Activated T-helper 1 cell treated with anti-CD3 and anti-CD28 coated beads, Interleukin-12 subunit alpha, Interleukin-12 subunit beta, Interleukin-2, Interleukin-4 antibody, amounts not matched to agents 30 ng/mL and 10 ng/mL and 1 ng/mL, durations not matched to agents 14 hours and 24 hours and 36 hours (primary cell): ENCODE measurements at regions of chr17 and their contacts with region 1.

Region 1: GRCh38 chr17:47895856-47896671 is at the start of gene SP2:
- DNase-seq: peak; percentile 100
- H3K4me3 Mint-ChIP-seq: peak within 1 kb of the TSS; percentile 98
- H3K27ac Mint-ChIP-seq: peak within 1 kb of the TSS; percentile 100
- H3K4me1 Mint-ChIP-seq: peaks cover 47% of the 10 kb centered on the region
- H3K27me3 Mint-ChIP-seq: peaks cover 3% of the 10 kb centered on the region
- total RNA-seq, gene SP2: 24.0 and 26.3 TPM in 2 replicates

Region 2: DNA sequence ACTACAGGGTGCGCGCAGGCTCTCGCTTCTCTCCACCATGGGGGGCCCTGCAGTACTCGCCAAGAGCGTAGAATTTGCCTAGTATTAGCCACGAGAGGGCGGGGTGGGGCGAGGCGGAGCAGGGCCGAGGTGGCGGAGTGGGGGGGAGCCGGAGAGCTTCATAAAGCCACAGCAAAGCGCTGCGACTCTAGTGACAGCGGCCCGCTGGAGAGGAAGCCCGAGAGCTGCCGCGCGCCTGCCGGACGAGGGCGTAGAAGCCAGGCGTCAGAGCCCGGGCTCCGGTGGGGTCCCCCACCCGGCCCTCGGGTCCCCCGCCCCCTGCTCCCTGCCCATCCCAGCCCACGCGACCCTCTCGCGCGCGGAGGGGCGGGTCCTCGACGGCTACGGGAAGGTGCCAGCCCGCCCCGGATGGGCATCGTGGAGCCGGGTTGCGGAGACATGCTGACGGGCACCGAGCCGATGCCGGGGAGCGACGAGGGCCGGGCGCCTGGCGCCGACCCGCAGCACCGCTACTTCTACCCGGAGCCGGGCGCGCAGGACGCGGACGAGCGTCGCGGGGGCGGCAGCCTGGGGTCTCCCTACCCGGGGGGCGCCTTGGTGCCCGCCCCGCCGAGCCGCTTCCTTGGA is 162.9 kb before region 1 on chr17 and contains the start of gene TBX21:
- intact Hi-C with region 1: loop called (anchors 2 kb)
- DNase-seq: peak; percentile 83
- H3K4me3 Mint-ChIP-seq: peak within 1 kb of the TSS; percentile 100
- H3K27ac Mint-ChIP-seq: peak within 1 kb of the TSS; percentile 96
- H3K4me1 Mint-ChIP-seq: peaks cover 84% of the 10 kb centered on the region
- H3K27me3 Mint-ChIP-seq: no peaks in the 10 kb centered on the region
- total RNA-seq, gene TBX21: 89.8 and 90.8 TPM in 2 replicates

Region 3: DNA sequence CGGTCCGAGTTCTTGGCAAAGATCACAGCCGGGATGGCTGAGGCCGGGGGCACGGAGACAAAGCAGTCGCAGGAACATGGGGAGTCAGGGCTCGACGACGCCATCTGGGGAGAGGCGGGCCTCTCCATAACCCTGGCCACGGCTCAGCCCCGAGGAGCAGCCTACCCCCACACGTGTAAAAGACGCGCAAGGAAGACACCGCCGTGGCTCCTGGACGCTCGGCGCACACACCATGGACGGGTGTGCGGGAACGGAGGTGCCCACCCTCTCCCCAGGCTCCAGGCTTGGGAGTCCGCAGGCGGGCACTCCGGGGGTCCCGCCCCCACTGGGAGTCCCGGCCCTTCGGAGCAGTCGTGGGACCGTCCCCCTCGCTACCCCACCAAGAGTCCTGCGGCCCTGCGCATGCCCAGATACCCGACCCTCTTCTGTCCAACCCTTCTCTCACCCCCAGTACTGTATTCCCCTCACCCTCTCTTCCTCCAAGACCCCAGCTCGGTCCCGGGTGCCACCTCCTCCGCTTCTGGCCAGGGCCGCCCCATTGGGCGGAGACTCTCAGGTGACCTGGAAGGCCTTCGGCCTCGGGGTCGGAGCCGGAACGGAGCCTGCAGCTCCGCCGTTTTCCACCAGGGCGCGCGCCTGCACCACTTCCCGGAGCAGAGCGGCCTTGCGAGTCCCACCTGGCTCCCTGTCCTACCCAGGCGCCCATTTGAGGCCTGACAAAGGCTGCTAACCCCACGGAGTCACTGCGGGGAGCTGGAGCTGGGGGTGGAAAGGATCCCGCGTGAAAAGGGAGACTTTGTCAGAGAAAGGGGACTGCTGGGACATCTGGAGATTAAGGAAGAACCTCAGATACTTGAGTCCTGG is 55.1 kb before region 1 on chr17 and contains the start of gene SCRN2:
- intact Hi-C with region 1: loop called (anchors 1 kb)
- DNase-seq: peak; percentile 86
- H3K4me3 Mint-ChIP-seq: peak within 1 kb of the TSS; percentile 96
- H3K27ac Mint-ChIP-seq: peak within 1 kb of the TSS; percentile 96
- H3K4me1 Mint-ChIP-seq: peaks cover 28% of the 10 kb centered on the region
- H3K27me3 Mint-ChIP-seq: peaks cover 16% of the 10 kb centered on the region
- total RNA-seq, gene SCRN2: 24.5 and 26.3 TPM in 2 replicates

Region 4: GRCh38 chr17:47970704-47971463 is 74.8 kb after region 1 on chr17 and contains the start of gene CDK5RAP3:
- intact Hi-C with region 1: loop called (anchors 1 kb)
- DNase-seq: peak; percentile 100
- H3K4me3 Mint-ChIP-seq: peak within 1 kb of the TSS; percentile 89
- H3K27ac Mint-ChIP-seq: peak within 1 kb of the TSS; percentile 93
- H3K4me1 Mint-ChIP-seq: peaks cover 31% of the 10 kb centered on the region
- H3K27me3 Mint-ChIP-seq: peaks cover 2% of the 10 kb centered on the region
- total RNA-seq, gene CDK5RAP3: 190 and 200 TPM in 2 replicates

Region 5: GRCh38 chr17:48107168-48108132 is 211.4 kb after region 1 on chr17 and contains the start of gene SNX11:
- intact Hi-C with region 1: loop called (anchors 5 kb)
- DNase-seq: peak; percentile 91
- H3K4me3 Mint-ChIP-seq: peak within 1 kb of the TSS; percentile 100
- H3K27ac Mint-ChIP-seq: peak within 1 kb of the TSS; percentile 99
- H3K4me1 Mint-ChIP-seq: peaks cover 63% of the 10 kb centered on the region
- H3K27me3 Mint-ChIP-seq: no peaks in the 10 kb centered on the region
- total RNA-seq, gene SNX11: 31.1 and 37.1 TPM in 2 replicates